ENCODE measurements at regions of chr11 and their contacts with region 1.

Region 1: DNA sequence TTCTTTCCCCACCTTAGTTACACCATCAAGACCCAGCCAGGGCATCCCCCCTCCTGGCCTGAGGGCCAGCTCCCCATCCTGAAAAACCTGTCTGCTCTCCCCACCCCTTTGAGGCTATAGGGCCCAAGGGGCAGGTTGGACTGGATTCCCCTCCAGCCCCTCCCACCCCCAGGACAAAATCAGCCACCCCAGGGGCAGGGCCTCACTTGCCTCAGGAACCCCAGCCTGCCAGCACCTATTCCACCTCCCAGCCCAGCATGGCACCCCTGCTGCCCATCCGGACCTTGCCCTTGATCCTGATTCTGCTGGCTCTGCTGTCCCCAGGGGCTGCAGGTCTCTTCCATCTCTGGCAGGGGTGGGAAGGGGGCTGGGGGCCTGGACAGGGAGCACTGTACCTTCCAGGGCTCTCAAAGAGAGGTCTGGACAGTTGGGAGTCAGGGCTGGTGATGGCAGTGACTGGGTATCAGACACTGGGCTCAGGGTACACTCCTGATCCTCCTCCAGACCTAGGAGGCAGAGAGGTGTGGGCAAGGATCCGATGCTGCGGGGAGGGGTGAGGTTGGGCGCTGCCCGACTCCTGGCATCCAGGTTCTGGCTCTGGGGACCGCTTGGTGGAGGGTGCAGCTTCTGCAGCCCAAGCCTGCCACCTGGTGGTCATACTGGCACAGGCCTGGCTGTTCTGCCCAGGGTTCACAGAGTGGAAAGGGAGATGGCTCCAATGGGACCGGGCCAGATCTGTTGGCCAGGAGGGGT is at the start of gene UPK2:
- DNase-seq: peak; percentile 62 to 93
- H3K4me3 ChIP-seq: no peak within 1 kb of the TSS
- H3K4me1 ChIP-seq: no peaks in the 10 kb centered on the region
- H3K27me3 ChIP-seq: peaks cover 6% of the 10 kb centered on the region; the same call in 1 of the 2 replicates

Region 2: DNA sequence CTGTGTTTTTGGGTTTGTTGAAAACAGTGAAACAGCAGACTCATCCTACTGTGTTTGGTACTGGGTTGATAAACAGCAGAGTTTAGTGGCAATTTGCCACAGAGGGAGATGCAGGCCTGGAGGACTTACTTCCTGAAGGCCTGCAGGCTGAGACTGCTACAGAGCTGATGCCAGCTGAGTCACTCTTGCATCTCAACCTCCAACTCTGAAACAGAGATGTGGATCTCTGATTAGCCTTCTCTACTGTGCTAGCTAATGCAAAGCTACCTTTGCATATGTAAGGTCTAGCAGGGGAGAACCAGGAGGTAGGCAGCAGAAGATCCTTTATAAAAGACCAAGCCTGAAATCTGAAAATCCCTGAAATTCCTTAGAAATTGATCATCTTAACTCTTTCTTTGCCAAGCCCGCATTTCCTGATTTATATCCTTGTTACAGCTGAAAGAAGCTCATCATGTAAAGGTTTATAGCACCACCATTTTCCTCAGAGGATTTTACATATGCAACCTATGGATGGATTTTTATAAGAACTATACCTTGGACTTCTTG is 540.5 kb before region 1 on chr11:
- in situ Hi-C with region 1: no loop called
- DNase-seq: peak; percentile 46 to 64
- H3K4me3 ChIP-seq: no peak overlapping the region
- H3K4me1 ChIP-seq: peaks cover 13% of the 10 kb centered on the region
- H3K27me3 ChIP-seq: no peaks in the 10 kb centered on the region

Region 3: GRCh38 chr11:118907051-118908042 is 48.9 kb before region 1 on chr11:
- in situ Hi-C with region 1: loop called (anchors 5 kb)
- DNase-seq: peak; percentile 67 to 90
- H3K4me3 ChIP-seq: no peak overlapping the region
- H3K4me1 ChIP-seq: peaks cover 30% of the 10 kb centered on the region
- H3K27me3 ChIP-seq: no peaks in the 10 kb centered on the region

Region 4: GRCh38 chr11:119044708-119045107 is 88.4 kb after region 1 on chr11:
- in situ Hi-C with region 1: no loop called
- DNase-seq: no peak
- H3K4me3 ChIP-seq: no peak overlapping the region
- H3K4me1 ChIP-seq: no peaks in the 10 kb centered on the region
- H3K27me3 ChIP-seq: no peaks in the 10 kb centered on the region

Region 5: GRCh38 chr11:119205574-119206510 is 249.6 kb after region 1 on chr11 and contains the start of gene CBL:
- in situ Hi-C with region 1: no loop called
- DNase-seq: peak; percentile 88 to 98
- H3K4me3 ChIP-seq: peak within 1 kb of the TSS; percentile 98
- H3K4me1 ChIP-seq: peaks cover 13% of the 10 kb centered on the region
- H3K27me3 ChIP-seq: no peaks in the 10 kb centered on the region